ENCODE measurements at regions of chr1 and their contacts with region 1.

Region 1: DNA sequence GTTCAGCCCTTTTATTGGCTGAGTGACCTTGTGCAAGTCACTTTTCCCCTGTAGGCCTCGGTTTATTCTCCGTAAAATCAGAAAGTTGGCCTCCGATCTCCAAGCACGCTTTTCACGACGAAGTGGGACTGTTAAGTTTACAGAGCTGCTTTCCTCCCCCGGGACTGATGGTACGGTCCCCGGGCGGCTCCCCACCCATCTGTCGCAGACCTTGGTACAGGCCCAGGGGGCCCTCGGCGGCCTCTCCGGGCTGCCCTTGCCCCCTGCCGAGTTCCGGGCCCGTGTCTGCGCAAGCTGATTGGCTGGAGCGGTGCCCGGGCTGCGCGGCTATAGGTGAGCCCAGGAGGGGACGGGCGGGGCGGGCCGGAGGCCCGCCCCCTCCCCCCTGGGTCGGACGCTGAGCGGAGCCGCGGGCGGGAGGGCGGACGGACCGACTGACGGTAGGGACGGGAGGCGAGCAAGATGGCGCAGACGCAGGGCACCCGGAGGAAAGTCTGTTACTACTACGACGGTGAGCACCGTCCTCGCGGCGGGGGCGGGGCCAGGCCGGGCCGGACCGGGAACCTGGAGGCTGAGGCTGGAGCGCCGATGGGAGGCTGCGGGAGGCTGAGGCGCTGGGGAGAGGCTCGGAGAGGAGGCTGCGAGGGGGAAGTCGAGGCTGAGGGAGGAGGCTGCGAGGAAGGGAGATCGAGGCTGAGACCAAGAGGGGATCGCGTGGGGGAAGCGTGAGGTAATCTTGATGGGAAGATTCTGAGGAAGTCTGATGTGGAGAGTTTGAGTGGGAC is at the start of gene HDAC1:
- DNase-seq: peak; percentile 89 to 98
- H3K4me3 ChIP-seq: peak within 1 kb of the TSS; percentile 77 to 80
- H3K27ac ChIP-seq: peak within 1 kb of the TSS; percentile 77 to 82
- H3K4me1 ChIP-seq: peaks cover 0 to 4% of the 10 kb centered on the region in 2 donors
- H3K27me3 ChIP-seq: no peaks in the 10 kb centered on the region
- CTCF ChIP-seq: no peak
- total RNA-seq, gene HDAC1: 75.0 TPM

Region 2: GRCh38 chr1:32200226-32201010 is 91.5 kb before region 1 on chr1 and contains the start of gene CCDC28B:
- intact Hi-C with region 1: loop called (anchors 5 kb)
- DNase-seq: peak in 1 of 2 donors; percentile 82
- H3K4me3 ChIP-seq: peak within 1 kb of the TSS; percentile 73 to 74
- H3K27ac ChIP-seq: peak within 1 kb of the TSS; percentile 66 to 68
- H3K4me1 ChIP-seq: peaks cover 7 to 21% of the 10 kb centered on the region in 2 donors
- H3K27me3 ChIP-seq: no peaks in the 10 kb centered on the region
- CTCF ChIP-seq: no peak
- total RNA-seq, gene CCDC28B: 29.1 TPM

Region 3: DNA sequence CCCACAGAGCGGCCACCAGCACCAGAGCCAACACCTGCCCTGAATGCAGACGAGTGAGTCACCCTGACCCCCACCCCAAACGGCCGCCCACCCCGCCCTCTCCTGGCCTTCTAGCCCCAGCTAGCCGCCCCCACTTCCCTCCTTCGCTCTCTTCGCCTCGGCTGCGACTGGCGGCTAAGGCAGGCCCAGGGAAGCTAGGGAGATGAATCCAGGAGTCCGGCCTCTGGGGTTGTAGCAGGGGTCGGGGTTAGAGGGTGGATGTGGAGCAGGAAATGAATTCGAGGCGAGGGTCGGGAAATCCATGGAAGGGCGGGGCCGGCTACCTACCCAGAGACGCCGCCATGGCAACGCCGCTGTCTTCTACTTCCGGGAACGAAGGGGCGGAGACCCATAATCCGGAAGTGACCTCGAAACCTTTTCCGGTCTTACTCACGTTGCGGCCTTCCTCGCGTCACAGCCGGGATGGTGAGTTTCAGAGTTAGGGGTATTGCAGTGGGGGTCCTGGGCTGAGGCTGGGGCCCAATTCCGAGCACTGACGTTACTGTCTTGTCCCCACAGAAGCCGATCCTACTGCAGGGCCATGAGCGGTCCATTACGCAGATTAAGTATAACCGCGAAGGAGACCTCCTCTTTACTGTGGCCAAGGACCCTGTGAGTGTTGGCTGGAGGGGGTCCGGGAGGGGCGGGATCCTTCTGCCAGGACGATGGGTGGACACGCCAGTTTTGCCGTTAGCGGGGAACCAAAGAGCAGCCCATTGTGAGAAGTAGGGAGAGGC is 69.7 kb before region 1 on chr1 and contains the starts of genes EIF3I and TMEM234:
- intact Hi-C with region 1: loop called (anchors 5 kb)
- DNase-seq: peak; percentile 80 to 97
- H3K4me3 ChIP-seq: peak within 1 kb of the TSS; percentile 87 to 97
- H3K27ac ChIP-seq: peak within 1 kb of the TSS; percentile 81 to 97
- H3K4me1 ChIP-seq: peaks cover 19% of the 10 kb centered on the region in 2 donors
- H3K27me3 ChIP-seq: no peaks in the 10 kb centered on the region
- CTCF ChIP-seq: no peak
- total RNA-seq, gene EIF3I: 234 TPM
- total RNA-seq, gene TMEM234: 4.0 TPM

Region 4: GRCh38 chr1:32240140-32240951 is 51.6 kb before region 1 on chr1:
- intact Hi-C with region 1: loop called (anchors 2 kb)
- DNase-seq: peak; percentile 51 to 92
- H3K4me3 ChIP-seq: peak overlapping the region; percentile 69 to 78
- H3K27ac ChIP-seq: peak overlapping the region; percentile 87 to 89
- H3K4me1 ChIP-seq: peaks cover 0 to 8% of the 10 kb centered on the region in 2 donors
- H3K27me3 ChIP-seq: no peaks in the 10 kb centered on the region
- CTCF ChIP-seq: peak in 2 of 3 experiments; percentile 30 to 35

Region 5: DNA sequence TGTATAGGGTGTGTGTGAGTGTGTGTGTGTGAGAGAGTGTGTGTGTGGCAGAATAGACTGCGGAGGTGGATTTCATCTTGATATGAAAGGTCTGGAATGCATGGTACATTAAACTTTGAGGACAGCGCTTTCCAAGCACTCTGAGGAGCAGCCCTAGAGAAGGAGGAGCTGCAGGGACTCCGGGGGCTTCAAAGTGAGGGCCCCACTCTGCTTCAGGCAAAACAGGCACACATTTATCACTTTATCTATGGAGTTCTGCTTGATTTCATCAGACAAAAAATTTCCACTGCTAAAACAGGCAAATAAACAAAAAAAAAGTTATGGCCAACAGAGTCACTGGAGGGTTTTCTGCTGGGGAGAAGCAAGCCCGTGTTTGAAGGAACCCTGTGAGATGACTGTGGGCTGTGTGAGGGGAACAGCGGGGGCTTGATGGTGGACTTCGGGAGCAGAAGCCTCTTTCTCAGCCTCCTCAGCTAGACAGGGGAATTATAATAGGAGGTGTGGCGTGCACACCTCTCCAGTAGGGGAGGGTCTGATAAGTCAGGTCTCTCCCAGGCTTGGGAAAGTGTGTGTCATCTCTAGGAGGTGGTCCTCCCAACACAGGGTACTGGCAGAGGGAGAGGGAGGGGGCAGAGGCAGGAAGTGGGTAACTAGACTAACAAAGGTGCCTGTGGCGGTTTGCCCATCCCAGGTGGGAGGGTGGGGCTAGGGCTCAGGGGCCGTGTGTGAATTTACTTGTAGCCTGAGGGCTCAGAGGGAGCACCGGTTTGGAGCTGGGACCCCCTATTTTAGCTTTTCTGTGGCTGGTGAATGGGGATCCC is 18.3 kb before region 1 on chr1:
- intact Hi-C with region 1: no loop called
- DNase-seq: no peak
- H3K4me3 ChIP-seq: no peak overlapping the region
- H3K27ac ChIP-seq: no peak overlapping the region
- H3K4me1 ChIP-seq: no peaks in the 10 kb centered on the region
- H3K27me3 ChIP-seq: no peaks in the 10 kb centered on the region
- CTCF ChIP-seq: no peak

Region 6: DNA sequence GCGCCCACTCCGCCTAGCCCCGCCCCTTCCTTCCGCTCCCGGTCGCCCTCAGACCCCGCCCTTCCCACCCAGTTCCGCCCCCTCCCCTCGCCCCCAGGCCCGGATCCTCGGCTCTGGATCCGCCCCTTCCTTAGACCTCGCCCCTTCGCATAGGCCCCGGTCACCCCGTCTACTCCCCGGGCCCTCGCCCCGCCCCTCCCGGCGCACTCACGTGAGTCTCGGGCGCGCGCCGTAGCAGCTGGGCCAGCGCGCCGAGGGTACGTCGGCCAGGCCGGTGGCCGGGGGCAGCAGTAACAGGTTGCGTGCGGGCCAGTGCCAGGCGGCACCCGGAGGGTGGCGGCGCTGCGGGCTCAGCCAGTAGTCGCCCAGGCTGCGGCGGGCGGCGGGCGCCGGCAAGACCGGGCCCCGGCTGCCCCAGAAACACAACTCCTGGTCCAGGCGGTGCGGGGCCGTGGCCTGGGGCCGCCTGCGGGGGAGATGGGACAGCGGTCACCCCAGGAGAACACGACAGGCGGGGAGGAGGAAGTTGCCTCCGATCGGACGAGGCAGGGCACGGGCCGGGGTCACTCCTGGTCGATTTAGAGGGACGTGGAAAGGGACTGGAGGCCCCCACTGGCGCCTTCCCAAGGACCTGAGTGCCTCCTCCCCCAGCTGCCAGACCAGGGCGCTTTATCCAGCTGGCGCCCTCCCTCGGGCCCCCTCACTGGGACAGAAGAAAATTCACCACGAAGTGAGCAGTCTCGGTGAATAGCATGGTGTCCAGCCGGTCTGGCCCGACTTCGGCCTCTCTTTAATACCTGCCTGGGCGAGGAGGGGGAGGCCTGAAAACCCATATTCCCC is 59.7 kb after region 1 on chr1:
- intact Hi-C with region 1: loop called (anchors 2 kb)
- DNase-seq: peak; percentile 76 to 97
- H3K4me3 ChIP-seq: peak overlapping the region; percentile 76 to 82
- H3K27ac ChIP-seq: peak overlapping the region; percentile 81 to 84
- H3K4me1 ChIP-seq: peaks cover 12 to 29% of the 10 kb centered on the region in 2 donors
- H3K27me3 ChIP-seq: no peaks in the 10 kb centered on the region
- CTCF ChIP-seq: peak in 1 of 3 experiments; percentile 6

Region 7: DNA sequence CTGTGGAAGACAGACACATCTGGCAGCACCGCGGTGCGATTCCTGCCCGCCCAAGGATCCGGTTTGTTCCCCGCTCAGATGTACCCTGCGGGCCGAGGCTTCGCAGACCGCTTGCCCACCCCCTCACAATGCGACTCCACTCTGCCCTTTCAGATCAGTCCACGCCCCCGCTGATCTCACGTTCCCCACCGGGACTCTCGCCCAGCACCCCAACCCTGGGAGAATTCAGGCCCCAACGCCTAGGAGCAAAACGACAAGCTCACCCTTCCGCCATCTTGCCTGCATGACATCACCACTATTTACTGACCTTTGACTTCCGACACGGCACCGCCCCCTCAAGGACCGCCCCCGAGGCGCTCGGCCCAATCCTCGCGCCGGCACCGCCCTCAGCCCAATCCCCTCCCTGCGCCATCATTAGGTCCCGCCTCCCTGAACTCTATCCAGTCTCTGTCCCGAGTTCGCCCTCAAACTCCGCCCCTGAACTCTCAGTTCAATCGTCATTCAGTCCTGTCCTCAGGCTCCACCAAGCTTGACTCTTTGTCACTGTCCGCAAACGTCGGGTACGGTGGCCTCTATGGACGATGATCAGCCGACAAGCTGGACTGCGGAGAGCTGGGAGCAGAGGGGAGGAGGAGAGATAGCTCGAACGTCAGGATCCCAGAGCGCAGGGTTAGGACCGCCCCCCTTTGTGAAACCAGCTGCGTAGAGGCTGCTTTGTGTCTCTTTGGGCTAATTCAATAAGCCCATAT is 102.4 kb after region 1 on chr1 and contains the start of gene BSDC1:
- intact Hi-C with region 1: loop called (anchors 2 kb)
- DNase-seq: peak; percentile 97 to 99
- H3K4me3 ChIP-seq: peak within 1 kb of the TSS; percentile 72 to 86
- H3K27ac ChIP-seq: peak within 1 kb of the TSS; percentile 87 to 95
- H3K4me1 ChIP-seq: peaks cover 9 to 24% of the 10 kb centered on the region in 2 donors
- H3K27me3 ChIP-seq: no peaks in the 10 kb centered on the region
- CTCF ChIP-seq: no peak
- total RNA-seq, gene BSDC1: 56.1 TPM

Measured in ascending aorta (tissue), 2 donors.